ENCODE measurements at regions of chr13 and their contacts with region 1.

Region 1: GRCh38 chr13:53144826-53145225 is 116.2 kb downstream of the OLFM4 start:
- DNase-seq: no peak
- H3K4me3 ChIP-seq: no peak overlapping the region
- H3K27ac ChIP-seq: no peak overlapping the region
- H3K4me1 ChIP-seq: peaks cover 41% of the 10 kb centered on the region in 2 donors
- H3K27me3 ChIP-seq: no peaks in the 10 kb centered on the region
- CTCF ChIP-seq: no peak
- POLR2A ChIP-seq: no peak

Region 2: GRCh38 chr13:53028637-53029203 is 116.1 kb before region 1 on chr13 and contains the start of gene OLFM4:
- intact Hi-C with region 1: loop called (anchors 10 kb)
- DNase-seq: no peak
- H3K4me3 ChIP-seq: no peak within 1 kb of the TSS
- H3K27ac ChIP-seq: no peak within 1 kb of the TSS
- H3K4me1 ChIP-seq: no peaks in the 10 kb centered on the region
- H3K27me3 ChIP-seq: no peaks in the 10 kb centered on the region
- CTCF ChIP-seq: no peak
- POLR2A ChIP-seq: no peak
- total RNA-seq, gene OLFM4: 0.11 to 3.5 TPM in 2 of 4 donors, not detected in the others

Region 3: DNA sequence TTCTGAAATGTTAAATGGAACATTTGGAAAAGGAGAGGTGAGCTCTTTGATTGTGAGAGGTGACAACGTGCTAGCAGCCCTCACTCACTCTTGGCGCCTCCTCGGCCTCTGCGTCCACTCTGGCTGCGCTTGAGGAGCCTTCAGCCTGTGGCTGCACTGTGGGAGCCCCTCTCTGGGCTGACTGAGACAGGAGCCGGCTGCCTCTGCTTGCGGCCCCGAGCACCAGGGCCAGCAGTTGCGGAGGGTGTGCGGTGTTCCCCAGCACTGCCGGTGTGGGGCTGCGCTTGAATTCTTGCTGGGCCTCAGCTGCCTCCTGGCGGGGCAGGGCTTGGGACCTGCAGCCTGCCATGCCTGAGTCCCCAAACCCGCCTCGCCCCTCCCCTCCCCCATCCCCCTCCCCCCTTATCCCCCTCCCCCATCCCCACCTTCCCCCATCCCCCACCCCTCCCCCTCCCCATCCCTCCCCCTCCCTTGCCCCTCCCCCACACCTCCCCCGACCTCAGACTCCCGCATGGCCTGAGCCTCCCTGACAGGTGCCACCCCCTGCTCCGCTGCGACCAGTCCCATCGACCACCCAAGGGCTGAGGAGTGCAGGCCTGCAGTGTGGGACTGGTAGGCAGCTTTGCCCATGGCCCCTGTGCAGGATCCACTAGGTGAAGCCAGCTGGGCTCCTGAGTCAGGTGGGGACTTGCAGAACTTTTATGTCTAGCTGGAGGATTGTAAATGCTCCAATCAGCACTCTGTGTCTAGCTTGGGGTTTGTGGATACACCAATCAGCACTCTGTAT is 294.8 kb after region 1 on chr13:
- intact Hi-C with region 1: no loop called
- DNase-seq: no peak
- H3K4me3 ChIP-seq: no peak overlapping the region
- H3K27ac ChIP-seq: no peak overlapping the region
- H3K4me1 ChIP-seq: no peaks in the 10 kb centered on the region
- H3K27me3 ChIP-seq: no peaks in the 10 kb centered on the region
- CTCF ChIP-seq: no peak
- POLR2A ChIP-seq: no peak

Region 4: DNA sequence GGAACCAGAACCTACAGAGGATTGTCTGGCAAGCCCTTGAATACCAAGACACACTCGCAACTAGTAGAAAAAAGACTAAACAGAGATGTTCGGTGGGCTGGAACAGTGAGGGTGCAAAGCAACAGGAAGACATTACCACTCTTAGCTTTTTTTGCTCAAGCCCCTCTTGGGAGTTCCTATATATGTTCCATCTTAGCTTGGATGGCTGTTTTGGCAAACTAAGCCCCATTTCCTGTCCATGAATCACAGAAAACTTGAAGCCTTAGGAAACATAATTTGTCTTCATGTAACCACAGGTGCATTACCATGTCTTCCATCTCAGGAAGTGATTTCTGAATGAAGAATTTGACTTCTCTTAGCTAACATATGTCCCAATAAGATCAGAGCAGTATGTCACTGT is 330.1 kb after region 1 on chr13:
- intact Hi-C with region 1: no loop called
- DNase-seq: no peak
- H3K4me3 ChIP-seq: no peak overlapping the region
- H3K27ac ChIP-seq: no peak overlapping the region
- H3K4me1 ChIP-seq: no peaks in the 10 kb centered on the region
- H3K27me3 ChIP-seq: no peaks in the 10 kb centered on the region
- CTCF ChIP-seq: no peak
- POLR2A ChIP-seq: no peak

Measured in thyroid gland (tissue), 4 donors.